Activated CD4-positive, alpha-beta memory T cell treated with anti-CD3 and anti-CD28 coated beads for 36 hours (primary cell): ENCODE measurements at regions of chr15 and their contacts with region 1.

Region 1: DNA sequence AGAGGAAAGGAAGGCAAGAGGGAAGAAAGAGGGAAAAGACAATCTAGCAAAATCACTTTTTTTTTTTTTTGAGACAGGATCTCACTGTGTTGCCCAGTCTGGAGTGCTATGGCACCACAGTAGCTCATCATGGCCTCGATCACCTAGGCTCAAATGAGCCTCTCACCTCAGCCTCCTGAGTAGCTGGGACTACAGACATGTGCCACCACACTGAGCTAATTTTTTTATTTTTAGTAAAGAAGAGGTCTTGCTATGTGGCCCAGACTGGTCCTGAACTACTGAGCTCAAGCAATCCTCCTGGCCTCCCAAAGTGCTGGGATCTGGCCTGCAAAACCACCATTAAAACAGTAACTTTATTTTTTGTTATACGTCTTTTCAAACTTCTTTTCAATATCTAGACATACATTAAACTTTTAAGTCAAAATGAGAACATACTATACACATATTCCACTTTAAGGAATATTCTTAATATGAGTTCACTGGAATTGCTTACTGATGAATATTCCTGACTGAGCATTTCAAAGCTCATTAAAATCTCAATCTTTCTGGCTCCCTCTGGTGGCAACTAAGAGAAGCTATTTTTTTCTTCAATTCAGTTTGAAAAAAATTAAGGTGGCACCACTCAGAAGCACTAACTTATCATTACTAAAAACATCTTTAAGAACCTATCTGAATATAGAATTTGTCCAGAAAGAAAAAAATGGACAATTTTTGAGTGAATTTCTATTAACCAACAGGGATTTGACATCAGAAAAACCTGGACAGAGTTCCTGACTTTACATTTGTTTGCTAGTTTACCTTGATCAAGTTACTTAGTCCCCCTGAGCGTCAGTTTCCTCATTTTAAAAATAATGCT is 40.9 kb downstream of the UACA start:
- DNase-seq: no peak
- H3K4me3 Mint-ChIP-seq: no peak overlapping the region
- H3K27ac Mint-ChIP-seq: no peak overlapping the region
- H3K4me1 Mint-ChIP-seq: no peaks in the 10 kb centered on the region
- H3K27me3 Mint-ChIP-seq: peaks cover 3% of the 10 kb centered on the region

Region 2: DNA sequence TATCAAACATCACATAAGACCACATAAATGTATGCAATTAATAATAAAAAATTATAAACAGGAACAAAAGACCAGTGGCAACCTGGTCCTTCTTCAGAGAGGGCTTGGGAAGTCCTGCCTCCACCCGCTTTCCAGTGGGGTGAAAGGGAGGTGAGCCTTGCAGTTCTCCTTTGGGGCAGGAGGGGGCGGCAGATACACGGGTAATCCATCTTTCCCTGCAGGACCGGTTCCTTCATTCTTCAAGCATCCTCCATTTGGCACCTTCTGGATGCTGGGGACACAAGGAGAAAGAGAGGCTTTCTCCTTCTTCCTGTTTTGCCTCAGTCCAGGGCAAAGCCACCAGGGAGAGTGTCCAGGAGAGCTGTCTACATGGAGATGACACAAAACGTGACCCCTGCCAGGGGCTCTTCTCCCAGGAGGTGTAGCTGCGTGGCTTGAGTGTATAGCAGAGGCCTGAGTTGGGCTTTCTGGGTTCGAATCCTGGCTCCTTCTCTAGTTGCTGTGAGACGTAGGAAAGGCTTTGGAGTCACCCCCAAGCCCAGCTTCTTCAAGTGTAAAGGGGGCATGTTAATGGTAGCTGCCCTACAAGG is 1246.6 kb before region 1 on chr15:
- CTCF ChIA-PET with region 1: interaction called, 36 read pairs
- POLR2A ChIA-PET with region 1: no interaction called
- intact Hi-C with region 1: loop called (anchors 10 kb)
- DNase-seq: peak; percentile 83
- H3K4me3 Mint-ChIP-seq: no peak overlapping the region
- H3K27ac Mint-ChIP-seq: no peak overlapping the region
- H3K4me1 Mint-ChIP-seq: no peaks in the 10 kb centered on the region
- H3K27me3 Mint-ChIP-seq: peaks cover 4% of the 10 kb centered on the region

Region 3: DNA sequence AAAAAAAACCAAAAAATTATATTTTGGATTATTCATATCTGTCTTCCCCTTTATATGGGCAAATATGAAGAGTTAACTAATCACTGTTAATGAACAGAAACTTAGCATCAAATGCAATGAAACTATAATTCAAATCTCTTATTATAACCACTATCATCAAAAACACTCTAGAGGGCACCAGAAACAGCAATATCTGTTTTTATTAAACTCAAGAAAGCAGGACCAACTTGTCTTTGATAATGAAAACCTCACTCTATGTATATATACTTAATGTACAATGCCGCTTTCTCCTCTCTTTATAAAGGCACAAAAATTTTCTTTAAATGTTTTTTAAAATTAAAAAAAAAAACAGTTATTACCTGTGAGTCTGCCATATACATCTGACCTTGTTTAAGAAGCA is 51.8 kb before region 1 on chr15:
- CTCF ChIA-PET with region 1: interaction called, 9 read pairs
- POLR2A ChIA-PET with region 1: no interaction called
- intact Hi-C with region 1: loop called (anchors 10 kb)
- DNase-seq: no peak
- H3K4me3 Mint-ChIP-seq: no peak overlapping the region
- H3K27ac Mint-ChIP-seq: no peak overlapping the region
- H3K4me1 Mint-ChIP-seq: peaks cover 16% of the 10 kb centered on the region
- H3K27me3 Mint-ChIP-seq: peaks cover 2% of the 10 kb centered on the region

Region 4: DNA sequence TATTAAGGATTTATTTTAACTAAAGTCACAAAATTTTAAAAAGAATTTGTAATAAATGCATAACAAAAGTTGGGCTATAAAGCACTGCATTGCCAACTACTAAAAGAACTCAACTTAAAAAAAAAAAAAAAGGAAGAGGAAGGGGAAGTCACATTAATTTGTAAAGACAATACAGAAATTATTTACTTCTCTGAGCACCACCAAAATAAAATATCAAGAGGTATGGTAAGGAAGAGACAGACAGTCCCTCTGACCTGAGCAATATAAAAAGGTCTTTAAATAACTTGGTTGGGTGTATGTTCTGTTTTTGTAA is 42.6 kb before region 1 on chr15:
- CTCF ChIA-PET with region 1: interaction called, 37 read pairs
- POLR2A ChIA-PET with region 1: no interaction called
- intact Hi-C with region 1: loop called (anchors 10 kb)
- DNase-seq: no peak
- H3K4me3 Mint-ChIP-seq: no peak overlapping the region
- H3K27ac Mint-ChIP-seq: no peak overlapping the region
- H3K4me1 Mint-ChIP-seq: peaks cover 2% of the 10 kb centered on the region
- H3K27me3 Mint-ChIP-seq: peaks cover 5% of the 10 kb centered on the region

Region 5: GRCh38 chr15:70687482-70687881 is 35.0 kb before region 1 on chr15:
- CTCF ChIA-PET with region 1: interaction called, 37 read pairs
- POLR2A ChIA-PET with region 1: no interaction called
- intact Hi-C with region 1: no loop called
- DNase-seq: no peak
- H3K4me3 Mint-ChIP-seq: no peak overlapping the region
- H3K27ac Mint-ChIP-seq: no peak overlapping the region
- H3K4me1 Mint-ChIP-seq: no peaks in the 10 kb centered on the region
- H3K27me3 Mint-ChIP-seq: peaks cover 4% of the 10 kb centered on the region

Region 6: GRCh38 chr15:70703096-70703878 is 19.2 kb before region 1 on chr15:
- CTCF ChIA-PET with region 1: interaction called, 12 read pairs
- POLR2A ChIA-PET with region 1: no interaction called
- intact Hi-C with region 1: no loop called
- DNase-seq: no peak
- H3K4me3 Mint-ChIP-seq: no peak overlapping the region
- H3K27ac Mint-ChIP-seq: no peak overlapping the region
- H3K4me1 Mint-ChIP-seq: no peaks in the 10 kb centered on the region
- H3K27me3 Mint-ChIP-seq: peaks cover 12% of the 10 kb centered on the region

Region 7: GRCh38 chr15:72464251-72464650 is 1741.8 kb after region 1 on chr15:
- CTCF ChIA-PET with region 1: no interaction called
- POLR2A ChIA-PET with region 1: no interaction called
- intact Hi-C with region 1: no loop called
- DNase-seq: no peak
- H3K4me3 Mint-ChIP-seq: no peak overlapping the region
- H3K27ac Mint-ChIP-seq: no peak overlapping the region
- H3K4me1 Mint-ChIP-seq: peaks cover 13% of the 10 kb centered on the region
- H3K27me3 Mint-ChIP-seq: no peaks in the 10 kb centered on the region